Caki2 (cell line): ENCODE measurements at regions of chr1 and their contacts with region 1.

Region 1: GRCh38 chr1:244435562-244436205 is 16.0 kb downstream of the ADSS2 start:
- DNase-seq: peak; percentile 63

Region 2: DNA sequence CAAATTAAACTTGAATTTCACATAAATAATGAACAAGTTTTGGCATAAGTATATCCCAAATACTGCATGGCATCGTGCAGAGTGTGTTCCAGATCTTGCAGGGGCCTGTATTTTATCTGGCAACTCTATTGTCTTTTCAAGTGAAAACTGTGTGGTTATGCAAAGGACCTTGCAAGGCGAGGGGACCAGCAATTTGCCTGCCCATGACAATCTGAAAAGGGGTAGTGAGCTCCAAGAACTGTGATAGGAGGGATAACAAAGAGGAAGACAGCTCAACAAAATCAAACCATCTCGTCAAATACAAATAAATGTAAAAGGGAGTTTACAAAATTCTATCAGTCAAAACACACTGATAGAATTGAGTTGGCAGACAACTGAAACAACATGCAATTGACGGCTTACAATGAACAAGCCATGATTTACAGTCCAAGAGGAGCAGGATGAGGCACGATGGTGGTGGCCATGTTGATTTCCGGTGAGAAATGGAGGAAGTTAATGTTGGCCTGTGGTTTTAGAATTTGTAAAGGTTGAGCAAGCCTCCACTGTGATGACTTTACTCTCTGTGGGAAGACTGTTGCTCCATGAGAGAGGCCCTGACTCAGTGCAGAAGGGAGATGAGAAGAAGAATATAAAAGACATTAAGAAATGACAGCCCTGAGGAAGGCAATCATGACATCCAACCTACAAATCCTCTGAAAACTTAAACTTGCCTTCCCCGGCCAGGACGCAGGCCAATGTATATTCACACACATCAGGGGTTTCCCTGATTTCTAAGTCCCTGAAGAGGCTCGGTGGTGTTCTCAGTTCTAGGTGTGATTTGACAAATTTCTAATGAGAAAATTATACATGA is 116.2 kb before region 1 on chr1:
- in situ Hi-C with region 1: loop called (anchors 25 kb)
- DNase-seq: no peak